ENCODE measurements at regions of chr1 and their contacts with region 1.

Region 1: GRCh38 chr1:54406339-54407153 is at the start of gene SSBP3:
- DNase-seq: peak; percentile 92 to 96 (median 93)
- H3K4me3 ChIP-seq: peak within 1 kb of the TSS; percentile 98
- H3K27ac ChIP-seq: peak within 1 kb of the TSS; percentile 74 to 93
- H3K4me1 ChIP-seq: peaks cover 18% of the 10 kb centered on the region
- H3K27me3 ChIP-seq: no peaks in the 10 kb centered on the region
- CTCF ChIP-seq: peak in 2 of 3 donors; percentile 32 to 37
- EP300 ChIP-seq: no peak
- POLR2A ChIP-seq: peak; percentile 79
- total RNA-seq, gene SSBP3: 41.2 to 247 (median 143) TPM

Region 2: GRCh38 chr1:54070171-54070837 is 336.2 kb before region 1 on chr1:
- intact Hi-C with region 1: loop called in 3 of 4 experiments (anchors 10 kb)
- DNase-seq: no peak
- H3K4me3 ChIP-seq: no peak overlapping the region
- H3K27ac ChIP-seq: no peak overlapping the region
- H3K4me1 ChIP-seq: peaks cover 1% of the 10 kb centered on the region
- H3K27me3 ChIP-seq: no peaks in the 10 kb centered on the region
- CTCF ChIP-seq: peak; percentile 45 to 89 (median 73)
- EP300 ChIP-seq: no peak
- POLR2A ChIP-seq: no peak

Region 3: GRCh38 chr1:54121482-54122134 is 284.9 kb before region 1 on chr1:
- intact Hi-C with region 1: loop called (anchors 5 to 10 kb)
- DNase-seq: peak; percentile 85 to 91 (median 89)
- H3K4me3 ChIP-seq: no peak overlapping the region
- H3K27ac ChIP-seq: no peak overlapping the region
- H3K4me1 ChIP-seq: peaks cover 4% of the 10 kb centered on the region
- H3K27me3 ChIP-seq: no peaks in the 10 kb centered on the region
- CTCF ChIP-seq: peak; percentile 76 to 83 (median 80)
- EP300 ChIP-seq: no peak
- POLR2A ChIP-seq: no peak

Region 4: GRCh38 chr1:54310439-54311328 is 95.9 kb before region 1 on chr1:
- intact Hi-C with region 1: loop called in 1 of 4 experiments (anchors 10 kb)
- DNase-seq: peak in 1 of 5 donors; percentile 45
- H3K4me3 ChIP-seq: no peak overlapping the region
- H3K27ac ChIP-seq: peak overlapping the region; percentile 34 to 70
- H3K4me1 ChIP-seq: peaks cover 49% of the 10 kb centered on the region
- H3K27me3 ChIP-seq: no peaks in the 10 kb centered on the region
- CTCF ChIP-seq: no peak
- EP300 ChIP-seq: no peak
- POLR2A ChIP-seq: no peak

Region 5: GRCh38 chr1:54350360-54350759 is 56.2 kb before region 1 on chr1:
- intact Hi-C with region 1: loop called in 1 of 4 experiments (anchors 5 kb)
- DNase-seq: no peak
- H3K4me3 ChIP-seq: no peak overlapping the region
- H3K27ac ChIP-seq: no peak overlapping the region
- H3K4me1 ChIP-seq: peaks cover 31% of the 10 kb centered on the region
- H3K27me3 ChIP-seq: no peaks in the 10 kb centered on the region
- CTCF ChIP-seq: no peak
- EP300 ChIP-seq: no peak
- POLR2A ChIP-seq: no peak

Region 6: DNA sequence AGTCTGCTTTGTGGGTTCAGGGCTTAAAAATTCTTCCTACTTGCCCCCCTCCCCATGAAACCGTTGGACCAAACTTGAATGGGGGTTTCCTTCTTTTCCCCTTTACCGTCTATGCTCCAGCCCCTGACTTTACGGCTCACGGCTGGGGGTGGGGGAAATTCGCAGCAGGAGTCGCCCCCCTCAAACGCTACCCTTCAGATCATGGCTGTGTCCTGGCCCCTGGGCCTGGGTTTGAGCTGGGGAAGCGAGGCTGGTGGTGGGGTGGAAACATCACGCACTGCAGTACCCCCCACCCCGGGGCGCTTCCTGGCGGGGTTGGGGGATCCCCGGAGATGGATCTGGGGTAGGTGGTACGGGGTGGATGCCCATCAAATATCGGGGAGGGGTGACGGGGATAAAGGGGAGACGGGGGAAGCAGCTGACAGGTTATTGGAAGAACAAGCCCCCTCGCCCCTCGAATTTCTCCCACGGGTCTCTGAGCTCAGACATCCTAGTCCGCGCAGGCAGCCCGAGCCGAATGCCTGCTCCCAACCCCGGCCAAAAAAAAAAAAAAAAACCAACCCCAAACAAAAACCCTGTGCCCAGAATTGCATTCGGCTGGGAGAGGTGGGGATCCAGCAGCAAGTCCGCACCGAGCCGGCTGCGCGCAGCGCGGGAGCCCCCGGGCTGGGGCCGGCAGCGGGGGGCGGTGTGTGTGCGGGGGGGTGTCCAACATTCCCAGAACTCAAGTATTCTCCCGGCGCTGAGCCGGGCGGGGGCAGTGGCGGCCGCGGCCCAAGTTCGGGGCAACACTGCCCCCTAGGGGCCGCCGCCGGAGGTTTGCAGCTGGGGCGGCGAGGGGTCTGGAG is 82.5 kb after region 1 on chr1:
- intact Hi-C with region 1: loop called (anchors 1 to 2 kb)
- DNase-seq: peak; percentile 91 to 95 (median 92)
- H3K4me3 ChIP-seq: peak overlapping the region; percentile 54
- H3K27ac ChIP-seq: peak overlapping the region; percentile 88 to 92
- H3K4me1 ChIP-seq: peaks cover 13% of the 10 kb centered on the region
- H3K27me3 ChIP-seq: no peaks in the 10 kb centered on the region
- CTCF ChIP-seq: peak; percentile 94 to 98 (median 97)
- EP300 ChIP-seq: no peak
- POLR2A ChIP-seq: peak; percentile 17

Measured in ovary (tissue), 10 donors.